Thyroid gland (tissue), 4 donors: ENCODE measurements at regions of chrX and their contacts with region 1.

Region 1: GRCh38 chrX:134963041-134963440 is 27.8 kb upstream of the SMIM10 start:
- DNase-seq: no peak
- H3K4me3 ChIP-seq: no peak overlapping the region
- H3K27ac ChIP-seq: no peak overlapping the region
- H3K4me1 ChIP-seq: no peaks in the 10 kb centered on the region
- H3K27me3 ChIP-seq: no peaks in the 10 kb centered on the region
- CTCF ChIP-seq: no peak
- POLR2A ChIP-seq: no peak

Region 2: GRCh38 chrX:134572816-134573682 is 390.0 kb before region 1 on chrX:
- intact Hi-C with region 1: no loop called
- DNase-seq: no peak
- H3K4me3 ChIP-seq: no peak overlapping the region
- H3K27ac ChIP-seq: no peak overlapping the region
- H3K4me1 ChIP-seq: no peaks in the 10 kb centered on the region
- H3K27me3 ChIP-seq: no peaks in the 10 kb centered on the region
- CTCF ChIP-seq: no peak
- POLR2A ChIP-seq: no peak

Region 3: GRCh38 chrX:134782796-134783195 is 180.2 kb before region 1 on chrX:
- intact Hi-C with region 1: no loop called
- DNase-seq: no peak
- H3K4me3 ChIP-seq: no peak overlapping the region
- H3K27ac ChIP-seq: no peak overlapping the region
- H3K4me1 ChIP-seq: no peaks in the 10 kb centered on the region
- H3K27me3 ChIP-seq: no peaks in the 10 kb centered on the region
- CTCF ChIP-seq: peak in 4 of 6 experiments; percentile 19 to 50 (median 43)
- POLR2A ChIP-seq: no peak

Region 4: DNA sequence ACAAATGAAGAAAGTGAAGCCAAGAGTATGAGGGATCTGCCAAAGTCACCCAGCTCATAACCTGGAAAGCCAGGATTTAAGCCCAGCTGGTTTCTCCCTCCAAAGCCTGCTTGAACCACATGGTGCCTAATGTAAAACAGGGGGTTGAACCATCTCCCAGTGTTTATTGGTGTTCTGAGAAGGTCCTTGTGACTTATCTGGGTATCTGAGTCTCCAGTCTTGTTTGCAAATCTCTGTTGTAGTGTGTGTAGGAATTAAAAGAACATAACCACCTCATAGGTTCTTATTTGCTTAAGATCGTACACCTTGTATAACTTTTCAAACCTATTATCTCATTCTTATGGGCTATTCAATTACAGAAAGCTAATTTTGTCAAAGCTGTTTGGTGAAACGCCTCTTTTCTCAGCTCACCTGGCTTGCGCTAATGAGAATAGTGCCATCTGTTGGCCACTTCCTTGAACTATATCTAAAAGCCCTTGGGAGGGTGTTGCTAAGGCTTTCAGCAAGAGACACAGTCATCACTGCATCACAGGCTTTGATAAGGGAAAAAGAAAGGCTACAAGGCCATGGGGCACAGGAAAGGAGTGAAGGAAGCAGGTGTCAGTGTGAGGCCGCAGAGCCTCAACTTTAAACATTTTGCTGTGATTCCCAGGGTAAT is 123.3 kb after region 1 on chrX:
- intact Hi-C with region 1: loop called (anchors 5 kb)
- DNase-seq: peak in 1 of 2 donors; percentile 6
- H3K4me3 ChIP-seq: no peak overlapping the region
- H3K27ac ChIP-seq: no peak overlapping the region
- H3K4me1 ChIP-seq: no peaks in the 10 kb centered on the region
- H3K27me3 ChIP-seq: no peaks in the 10 kb centered on the region
- CTCF ChIP-seq: peak in 5 of 6 experiments; percentile 35 to 56 (median 47)
- POLR2A ChIP-seq: no peak